ENCODE measurements at regions of chr14 and their contacts with region 1.

Region 1: DNA sequence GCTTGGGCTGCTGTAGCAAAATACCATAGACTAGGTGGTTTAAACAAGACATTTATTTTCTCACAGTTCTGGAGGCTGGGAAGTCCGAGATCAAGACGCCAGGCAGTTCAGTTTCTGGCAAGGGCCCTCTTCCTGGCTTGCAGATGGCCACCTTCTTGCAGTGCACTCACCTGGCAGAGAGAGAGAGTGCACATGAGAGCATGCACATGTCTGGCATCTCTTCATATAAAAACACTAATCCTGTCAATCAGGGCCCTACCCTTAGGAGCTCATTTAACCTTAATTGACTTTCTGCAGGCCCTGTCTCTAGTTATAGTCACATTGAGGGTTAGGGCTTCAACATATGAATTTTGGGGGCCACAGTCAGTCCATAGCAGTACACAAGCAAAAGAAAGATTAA is 12.4 kb upstream of the EVL start:
- DNase-seq: no peak

Region 2: DNA sequence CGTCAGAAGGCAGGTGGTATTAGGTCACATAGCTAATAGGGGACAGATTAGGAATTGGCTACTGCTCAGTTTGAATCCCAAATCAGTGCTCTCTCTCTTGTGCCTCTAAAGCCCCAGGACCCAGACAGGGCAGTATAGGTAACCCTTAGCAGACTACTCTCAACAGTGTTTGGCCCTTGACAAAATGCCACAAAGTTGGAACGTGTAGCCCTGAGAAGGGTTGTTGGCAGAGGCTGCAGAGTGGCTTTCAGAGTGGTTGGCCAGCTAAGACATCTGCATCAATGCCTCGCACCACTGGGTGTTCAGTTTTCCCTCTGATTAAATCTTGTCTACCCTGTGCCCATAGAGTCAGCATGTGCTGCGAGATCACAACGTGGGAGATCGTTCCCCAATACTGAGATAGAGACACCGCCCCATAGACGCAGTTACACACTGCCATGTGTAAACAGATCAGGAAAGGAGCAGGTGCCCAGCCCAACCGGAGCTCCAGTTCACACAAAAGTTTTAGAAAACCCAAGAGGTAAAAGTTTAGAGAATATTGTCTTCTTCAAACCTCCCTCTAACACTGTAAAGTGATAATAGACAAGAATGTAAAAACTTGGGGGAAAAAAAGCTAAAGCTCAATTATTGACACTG is 211.3 kb before region 1 on chr14:
- intact Hi-C with region 1: no loop called
- DNase-seq: peak in 2 of 42 donors; percentile 17 to 24

Region 3: GRCh38 chr14:99936747-99937474 is 115.9 kb before region 1 on chr14:
- intact Hi-C with region 1: no loop called
- DNase-seq: peak in 3 of 42 donors; percentile 25 to 38 (median 26)

Region 4: DNA sequence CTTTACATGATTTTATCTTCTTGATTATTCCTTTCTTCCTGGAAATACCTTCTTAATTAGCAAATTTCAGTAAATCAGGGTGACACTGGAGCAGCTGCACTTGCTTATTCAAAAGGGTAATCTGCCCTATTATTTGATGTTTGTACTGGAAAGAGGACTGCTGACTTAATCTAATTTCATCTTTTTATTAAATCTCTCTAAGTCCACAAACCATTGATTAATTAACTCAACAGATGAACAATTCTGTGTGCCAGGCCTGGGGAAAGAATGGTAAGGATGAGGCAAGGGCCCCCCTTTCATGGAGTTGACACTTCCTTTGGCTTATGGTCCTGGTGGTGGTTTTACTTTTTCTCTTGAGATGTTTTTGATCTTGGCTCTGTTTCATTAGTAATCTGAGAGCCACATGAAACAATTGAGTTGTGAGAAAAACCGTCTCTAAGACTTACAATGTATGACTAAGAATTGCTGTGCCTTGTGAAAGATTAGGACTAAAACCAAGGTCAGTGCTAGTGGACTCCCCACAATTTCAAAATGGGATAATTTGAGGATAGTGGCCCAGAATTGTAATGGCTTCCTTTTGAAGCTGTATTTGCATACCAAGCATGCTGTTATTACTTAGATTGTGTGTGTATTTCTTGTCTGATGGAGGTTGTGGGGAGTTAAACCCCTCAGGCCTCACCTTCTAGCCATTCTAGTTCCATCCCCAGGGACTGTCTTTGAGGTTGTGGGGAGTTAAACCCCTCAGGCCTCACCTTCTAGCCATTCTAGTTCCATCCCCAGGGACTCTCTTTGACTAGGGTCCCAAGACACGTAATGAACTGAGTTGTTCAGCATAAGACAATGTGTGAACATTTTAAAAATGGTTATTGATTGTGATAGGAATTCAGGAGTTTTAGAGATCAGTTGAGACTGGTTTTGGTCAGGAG is 40.2 kb before region 1 on chr14:
- intact Hi-C with region 1: loop called (anchors 2 kb)
- DNase-seq: no peak